GM12878 (cell line): ENCODE measurements at regions of chr3 and their contacts with region 1.

Region 1: DNA sequence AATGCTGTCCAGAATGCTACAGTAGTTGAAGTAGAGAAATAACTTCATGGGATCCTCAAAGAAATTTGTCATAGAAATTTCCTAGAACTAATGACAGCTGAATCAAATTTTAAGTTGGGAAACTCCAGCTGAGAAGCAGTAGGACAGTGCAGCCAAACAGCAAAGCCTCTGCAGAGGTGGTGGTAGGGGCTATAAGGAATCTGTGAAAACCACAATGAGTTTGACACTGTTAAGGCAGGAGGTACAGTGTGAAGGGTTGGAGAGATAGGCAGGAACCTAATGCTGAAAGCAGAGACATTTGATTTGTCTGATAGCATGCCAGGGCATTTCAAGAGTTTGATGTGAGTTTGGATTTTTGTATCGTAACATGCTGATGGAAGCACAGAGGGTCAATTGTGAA is 22.0 kb downstream of the ASTE1 start:
- DNase-seq: no peak
- ATAC-seq: no peak; the same call in 2 of the 3 replicates
- H3K4me3 ChIP-seq: no peak overlapping the region
- H3K27ac ChIP-seq: no peak overlapping the region
- H3K4me1 ChIP-seq: no peaks in the 10 kb centered on the region
- H3K27me3 ChIP-seq: no peaks in the 10 kb centered on the region
- CTCF ChIP-seq: no peak
- EP300 ChIP-seq: no peak
- POLR2A ChIP-seq: no peak
- RAD21 ChIP-seq: no peak

Region 2: DNA sequence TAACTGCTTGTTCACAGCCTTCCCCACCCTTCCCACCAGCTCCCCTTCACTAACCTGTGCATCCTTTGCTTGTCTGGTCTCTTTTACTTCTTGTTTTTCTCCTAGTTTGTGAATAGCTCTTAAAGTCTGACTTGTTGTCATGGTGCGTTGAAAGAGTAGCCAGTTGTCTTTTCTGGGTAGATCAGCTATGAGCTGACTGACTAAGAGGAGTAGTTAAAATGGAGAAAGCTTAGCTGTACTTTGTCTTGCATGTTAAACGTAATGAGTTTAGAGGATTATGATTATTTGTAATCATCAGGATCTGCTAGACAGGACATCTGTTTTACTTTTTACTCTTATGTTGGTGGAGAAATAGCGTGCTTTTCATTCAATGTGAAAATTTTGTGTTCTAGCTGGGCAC is 74.8 kb before region 1 on chr3:
- CTCF ChIA-PET with region 1: no interaction called
- POLR2A ChIA-PET with region 1: no interaction called
- RAD21 ChIA-PET with region 1: no interaction called
- SMC1A ChIA-PET with region 1: no interaction called
- in situ Hi-C with region 1: no loop called
- intact Hi-C with region 1: no loop called
- DNase-seq: no peak
- ATAC-seq: no peak
- H3K4me3 ChIP-seq: no peak overlapping the region
- H3K27ac ChIP-seq: no peak overlapping the region
- H3K4me1 ChIP-seq: peaks cover 11% of the 10 kb centered on the region
- H3K27me3 ChIP-seq: no peaks in the 10 kb centered on the region
- CTCF ChIP-seq: no peak
- EP300 ChIP-seq: no peak
- POLR2A ChIP-seq: no peak
- RAD21 ChIP-seq: no peak

Region 3: GRCh38 chr3:131020122-131020693 is 15.6 kb after region 1 on chr3:
- CTCF ChIA-PET with region 1: interaction called, 3 read pairs
- POLR2A ChIA-PET with region 1: interaction called, 3 read pairs
- RAD21 ChIA-PET with region 1: no interaction called
- SMC1A ChIA-PET with region 1: interaction called, 17 read pairs
- in situ Hi-C with region 1: no loop called
- intact Hi-C with region 1: no loop called
- DNase-seq: no peak
- ATAC-seq: peak; percentile 75
- H3K4me3 ChIP-seq: no peak overlapping the region
- H3K27ac ChIP-seq: no peak overlapping the region
- H3K4me1 ChIP-seq: no peaks in the 10 kb centered on the region
- H3K27me3 ChIP-seq: no peaks in the 10 kb centered on the region
- CTCF ChIP-seq: no peak
- EP300 ChIP-seq: no peak
- POLR2A ChIP-seq: no peak
- RAD21 ChIP-seq: no peak